ENCODE measurements at regions of chr11 and their contacts with region 1.

Region 1: DNA sequence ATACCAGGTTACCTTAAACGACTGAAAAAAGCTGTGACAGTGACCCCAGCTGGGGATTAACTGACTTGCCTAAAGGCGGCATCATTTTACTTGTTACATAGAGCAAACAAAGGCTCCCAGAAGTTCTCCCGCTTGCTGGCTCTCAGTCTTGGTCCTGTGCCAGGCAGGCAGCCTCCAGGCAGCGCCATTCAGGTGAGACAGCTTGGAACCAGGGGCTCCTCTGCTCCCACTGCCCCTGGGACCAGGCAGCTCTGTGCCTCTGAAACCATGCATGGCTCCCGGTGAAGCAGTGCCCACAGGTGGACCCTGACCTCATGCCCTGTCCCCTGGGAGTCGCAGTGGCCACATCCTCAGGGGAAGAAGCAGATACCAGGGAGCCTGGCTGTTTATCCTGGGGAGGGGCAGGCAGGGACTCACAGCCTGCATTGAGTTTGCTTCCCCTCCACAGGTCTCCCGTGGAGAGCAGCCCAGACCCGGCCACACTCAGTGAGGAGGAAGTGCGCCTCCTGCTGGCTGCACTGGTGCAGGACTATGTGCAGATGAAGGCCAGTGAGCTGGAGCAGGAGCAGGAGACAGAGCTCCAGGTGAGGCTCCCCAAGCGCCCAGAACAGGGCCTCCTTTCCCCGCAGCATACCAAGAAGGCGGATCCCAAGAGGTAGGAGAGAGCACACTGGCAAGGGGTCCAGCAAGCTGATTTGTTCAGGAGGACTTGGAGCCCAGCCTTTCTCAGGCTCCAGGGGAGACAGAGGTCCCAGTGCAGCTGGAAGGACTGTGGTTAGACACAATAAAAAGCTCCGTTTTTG is 15.6 kb upstream of the CYP2R1 start:
- DNase-seq: peak; percentile 73 to 90 (median 85)
- ATAC-seq: peak; percentile 51
- H3K4me3 ChIP-seq: no peak overlapping the region
- H3K4me3 Mint-ChIP-seq: no peak overlapping the region
- H3K27ac ChIP-seq: no peak overlapping the region
- H3K27ac Mint-ChIP-seq: no peak overlapping the region
- H3K4me1 ChIP-seq: peaks cover 16% of the 10 kb centered on the region
- H3K4me1 Mint-ChIP-seq: peaks cover 41% of the 10 kb centered on the region
- H3K27me3 ChIP-seq: no peaks in the 10 kb centered on the region
- H3K27me3 Mint-ChIP-seq: no peaks in the 10 kb centered on the region
- CTCF ChIP-seq: peak; percentile 82

Region 2: GRCh38 chr11:13772223-13773046 is 1135.2 kb before region 1 on chr11:
- CTCF ChIA-PET with region 1: interaction called, 6 read pairs
- POLR2A ChIA-PET with region 1: no interaction called
- intact Hi-C with region 1: loop called in 1 of 2 experiments (anchors 2 kb)
- DNase-seq: peak in 4 of 9 experiments; percentile 21 to 84 (median 60)
- ATAC-seq: peak; percentile 66
- H3K4me3 ChIP-seq: no peak overlapping the region
- H3K4me3 Mint-ChIP-seq: no peak overlapping the region
- H3K27ac ChIP-seq: no peak overlapping the region
- H3K27ac Mint-ChIP-seq: no peak overlapping the region
- H3K4me1 ChIP-seq: no peaks in the 10 kb centered on the region
- H3K4me1 Mint-ChIP-seq: peaks cover 3% of the 10 kb centered on the region
- H3K27me3 ChIP-seq: no peaks in the 10 kb centered on the region
- H3K27me3 Mint-ChIP-seq: peaks cover 6% of the 10 kb centered on the region
- CTCF ChIP-seq: peak; percentile 75

Region 3: GRCh38 chr11:14223636-14224288 is 683.9 kb before region 1 on chr11:
- CTCF ChIA-PET with region 1: no interaction called
- POLR2A ChIA-PET with region 1: no interaction called
- intact Hi-C with region 1: no loop called
- DNase-seq: no peak
- ATAC-seq: no peak
- H3K4me3 ChIP-seq: no peak overlapping the region
- H3K4me3 Mint-ChIP-seq: no peak overlapping the region
- H3K27ac ChIP-seq: no peak overlapping the region
- H3K27ac Mint-ChIP-seq: no peak overlapping the region
- H3K4me1 ChIP-seq: no peaks in the 10 kb centered on the region
- H3K4me1 Mint-ChIP-seq: peaks cover 3% of the 10 kb centered on the region
- H3K27me3 ChIP-seq: no peaks in the 10 kb centered on the region
- H3K27me3 Mint-ChIP-seq: no peaks in the 10 kb centered on the region
- CTCF ChIP-seq: no peak

Region 4: DNA sequence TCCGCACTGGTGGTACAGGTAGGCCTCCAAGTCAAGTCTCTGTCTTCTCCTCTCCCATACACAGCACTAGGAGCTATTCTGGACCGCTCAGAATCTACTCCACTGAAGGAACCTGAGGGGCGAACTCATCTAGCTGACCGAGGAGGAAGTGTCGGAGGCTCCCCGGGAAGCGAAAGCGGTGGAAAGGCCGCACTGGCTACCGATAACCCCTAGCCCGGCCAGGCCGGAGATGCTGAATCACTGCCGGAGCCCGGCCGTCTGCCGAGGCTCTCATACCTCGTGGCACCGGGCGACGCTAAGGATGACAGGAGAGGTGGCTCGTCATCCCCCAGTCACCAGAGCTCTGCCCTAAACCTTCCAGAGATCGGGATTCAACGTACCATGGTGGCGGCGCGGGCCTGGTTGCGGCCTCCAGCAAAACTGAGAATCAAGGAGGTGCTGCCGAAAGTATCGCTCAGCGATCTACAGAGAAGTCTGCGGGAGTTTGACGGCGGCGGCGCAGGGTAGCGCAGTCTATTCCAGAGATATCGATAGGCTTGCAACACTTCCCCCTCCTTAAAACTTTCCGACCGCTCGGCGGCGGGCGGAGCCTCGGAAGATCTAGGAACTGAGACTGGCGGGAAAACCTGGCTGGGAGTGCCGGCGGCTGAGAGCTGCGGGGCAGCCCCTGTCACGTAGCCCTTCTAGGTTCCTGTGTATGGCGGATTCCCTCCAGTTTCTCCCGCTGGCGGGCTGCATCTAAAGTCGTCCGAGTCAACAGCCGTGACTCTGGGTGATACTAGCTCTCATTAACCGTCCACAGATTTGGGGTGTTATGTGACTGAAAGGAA is 387.5 kb before region 1 on chr11 and contains the start of gene PSMA1:
- CTCF ChIA-PET with region 1: interaction called, 9 read pairs
- POLR2A ChIA-PET with region 1: no interaction called
- intact Hi-C with region 1: loop called (anchors 1 to 2 kb)
- DNase-seq: peak; percentile 74 to 95 (median 90)
- ATAC-seq: peak; percentile 90
- H3K4me3 ChIP-seq: peak within 1 kb of the TSS; percentile 82 to 84
- H3K4me3 Mint-ChIP-seq: peak within 1 kb of the TSS; percentile 98
- H3K27ac ChIP-seq: peak within 1 kb of the TSS; percentile 82 to 87
- H3K27ac Mint-ChIP-seq: peak within 1 kb of the TSS; percentile 97
- H3K4me1 ChIP-seq: peaks cover 19% of the 10 kb centered on the region
- H3K4me1 Mint-ChIP-seq: peaks cover 32% of the 10 kb centered on the region
- H3K27me3 ChIP-seq: no peaks in the 10 kb centered on the region
- H3K27me3 Mint-ChIP-seq: no peaks in the 10 kb centered on the region
- CTCF ChIP-seq: no peak
- total RNA-seq, gene PSMA1: 177 to 193 TPM

Region 5: GRCh38 chr11:14619603-14620531 is 287.7 kb before region 1 on chr11:
- CTCF ChIA-PET with region 1: interaction called, 15 read pairs
- POLR2A ChIA-PET with region 1: no interaction called
- intact Hi-C with region 1: loop called in 1 of 2 experiments (anchors 5 kb)
- DNase-seq: no peak
- ATAC-seq: no peak
- H3K4me3 ChIP-seq: no peak overlapping the region
- H3K4me3 Mint-ChIP-seq: no peak overlapping the region
- H3K27ac ChIP-seq: no peak overlapping the region
- H3K27ac Mint-ChIP-seq: peak overlapping the region; percentile 61
- H3K4me1 ChIP-seq: peaks cover 33% of the 10 kb centered on the region
- H3K4me1 Mint-ChIP-seq: peaks cover 84% of the 10 kb centered on the region
- H3K27me3 ChIP-seq: no peaks in the 10 kb centered on the region
- H3K27me3 Mint-ChIP-seq: no peaks in the 10 kb centered on the region
- CTCF ChIP-seq: no peak

Region 6: GRCh38 chr11:14892036-14892567 is 15.5 kb before region 1 on chr11 and contains the start of gene CYP2R1:
- CTCF ChIA-PET with region 1: interaction called, 25 read pairs
- POLR2A ChIA-PET with region 1: interaction called, 20 read pairs
- intact Hi-C with region 1: loop called (anchors 1 kb)
- DNase-seq: peak; percentile 81 to 95 (median 89)
- ATAC-seq: peak; percentile 74
- H3K4me3 ChIP-seq: peak within 1 kb of the TSS; percentile 68 to 75
- H3K4me3 Mint-ChIP-seq: peak within 1 kb of the TSS; percentile 88
- H3K27ac ChIP-seq: peak within 1 kb of the TSS; percentile 49 to 79
- H3K27ac Mint-ChIP-seq: peak within 1 kb of the TSS; percentile 93
- H3K4me1 ChIP-seq: peaks cover 10% of the 10 kb centered on the region
- H3K4me1 Mint-ChIP-seq: peaks cover 42% of the 10 kb centered on the region
- H3K27me3 ChIP-seq: no peaks in the 10 kb centered on the region
- H3K27me3 Mint-ChIP-seq: no peaks in the 10 kb centered on the region
- CTCF ChIP-seq: no peak
- total RNA-seq, gene CYP2R1: 10.7 to 12.6 TPM

Region 7: DNA sequence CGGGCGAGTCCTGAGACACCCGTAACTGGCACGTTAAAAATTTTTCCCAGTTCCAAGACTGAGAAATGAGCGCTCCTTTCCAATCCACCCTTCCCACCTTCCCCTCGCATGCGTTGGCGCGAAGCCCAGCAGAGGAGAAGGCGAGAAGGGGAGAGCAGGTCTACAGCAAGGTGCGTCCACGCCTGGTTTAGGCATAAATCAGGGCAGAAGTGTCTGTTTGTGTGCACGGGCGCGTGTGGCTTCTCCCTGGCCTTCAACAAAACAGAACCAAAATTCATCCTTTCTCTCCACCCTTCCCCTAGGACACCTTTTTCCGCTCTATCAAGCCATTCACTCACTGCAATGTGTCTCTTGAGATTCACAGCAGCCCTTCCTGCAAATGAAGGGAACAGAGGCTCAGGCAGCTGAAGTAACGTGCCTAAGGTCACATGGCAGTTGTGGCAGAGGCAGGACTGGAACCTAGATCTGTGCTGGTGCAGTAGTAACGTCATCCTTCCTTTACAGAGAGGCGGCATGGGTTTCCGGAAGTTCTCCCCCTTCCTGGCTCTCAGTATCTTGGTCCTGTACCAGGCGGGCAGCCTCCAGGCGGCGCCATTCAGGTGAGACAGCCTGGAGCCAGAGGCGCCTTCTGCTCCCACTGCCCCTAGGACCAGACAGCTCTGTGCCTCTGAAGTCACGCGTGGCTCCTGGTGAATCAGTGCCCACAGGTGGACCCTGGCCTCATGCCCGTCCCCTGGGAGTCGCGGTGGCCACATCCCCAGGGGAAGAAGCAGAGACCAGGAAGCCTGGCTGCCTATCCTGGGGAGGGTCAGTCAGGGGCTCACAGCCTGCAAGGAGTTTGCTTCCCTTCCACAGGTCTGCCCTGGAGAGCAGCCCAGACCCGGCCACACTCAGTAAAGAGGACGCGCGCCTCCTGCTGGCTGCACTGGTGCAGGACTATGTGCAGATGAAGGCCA is 166.9 kb after region 1 on chr11:
- CTCF ChIA-PET with region 1: interaction called, 94 read pairs
- POLR2A ChIA-PET with region 1: interaction called, 3 read pairs
- intact Hi-C with region 1: loop called (anchors 1 kb)
- DNase-seq: peak; percentile 64 to 89 (median 80)
- ATAC-seq: peak; percentile 91
- H3K4me3 ChIP-seq: peak overlapping the region; percentile 39 to 60
- H3K4me3 Mint-ChIP-seq: peak overlapping the region; percentile 84
- H3K27ac ChIP-seq: no peak overlapping the region
- H3K27ac Mint-ChIP-seq: no peak overlapping the region
- H3K4me1 ChIP-seq: peaks cover 18% of the 10 kb centered on the region
- H3K4me1 Mint-ChIP-seq: peaks cover 12% of the 10 kb centered on the region
- H3K27me3 ChIP-seq: peaks cover 9 to 16% of the 10 kb centered on the region in 2 experiments
- H3K27me3 Mint-ChIP-seq: peaks cover 27% of the 10 kb centered on the region
- CTCF ChIP-seq: peak; percentile 79

Region 8: DNA sequence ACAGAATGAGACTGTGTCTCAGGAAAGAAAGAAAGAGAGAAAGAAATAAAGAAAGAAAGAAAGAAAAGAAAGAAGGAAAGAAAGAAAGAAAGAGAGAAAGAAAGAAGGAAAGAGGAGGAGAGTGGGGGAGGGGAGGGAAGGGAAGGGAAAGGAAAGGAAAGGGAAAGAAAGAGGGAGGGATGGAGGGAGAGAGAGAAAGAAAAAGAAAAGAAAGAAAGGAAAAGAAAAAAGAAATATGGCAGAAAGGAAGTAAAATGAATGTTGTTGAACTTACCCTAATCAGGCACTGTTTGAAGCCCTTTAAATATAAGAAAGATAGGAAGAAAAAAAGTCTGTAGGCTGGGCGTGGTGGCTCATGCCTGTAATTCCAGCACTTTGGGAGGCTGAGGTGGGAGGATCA is 483.2 kb after region 1 on chr11:
- CTCF ChIA-PET with region 1: no interaction called
- POLR2A ChIA-PET with region 1: no interaction called
- intact Hi-C with region 1: no loop called
- DNase-seq: no peak
- ATAC-seq: no peak
- H3K4me3 ChIP-seq: no peak overlapping the region
- H3K4me3 Mint-ChIP-seq: no peak overlapping the region
- H3K27ac ChIP-seq: no peak overlapping the region
- H3K27ac Mint-ChIP-seq: no peak overlapping the region
- H3K4me1 ChIP-seq: no peaks in the 10 kb centered on the region
- H3K4me1 Mint-ChIP-seq: no peaks in the 10 kb centered on the region
- H3K27me3 ChIP-seq: no peaks in the 10 kb centered on the region
- H3K27me3 Mint-ChIP-seq: no peaks in the 10 kb centered on the region
- CTCF ChIP-seq: no peak